ENCODE measurements at regions of chr6 and their contacts with region 1.

Region 1: GRCh38 chr6:85678602-85679444 is 36.1 kb upstream of the SYNCRIP start:
- H3K4me3 ChIP-seq: peak overlapping the region; percentile 85
- H3K27ac ChIP-seq: peak overlapping the region; percentile 85
- H3K4me1 ChIP-seq: 0 out of 2 replicates have a peak, but pooled peaks cover 7% of the 10 kb centered on the region
- CTCF ChIP-seq: peak; percentile 82

Region 2: GRCh38 chr6:85537055-85537494 is 141.7 kb before region 1 on chr6:
- CTCF ChIA-PET with region 1: interaction called, 13 read pairs
- POLR2A ChIA-PET with region 1: interaction called, 8 read pairs
- H3K4me3 ChIP-seq: no peak overlapping the region
- H3K27ac ChIP-seq: no peak overlapping the region
- H3K4me1 ChIP-seq: no peaks in the 10 kb centered on the region
- CTCF ChIP-seq: no peak

Region 3: GRCh38 chr6:85612690-85613474 is 65.9 kb before region 1 on chr6:
- CTCF ChIA-PET with region 1: no interaction called
- POLR2A ChIA-PET with region 1: interaction called, 23 read pairs
- H3K4me3 ChIP-seq: no peak overlapping the region
- H3K27ac ChIP-seq: no peak overlapping the region
- H3K4me1 ChIP-seq: no peaks in the 10 kb centered on the region
- CTCF ChIP-seq: no peak

Region 4: GRCh38 chr6:85642774-85643536 is 35.9 kb before region 1 on chr6 and contains the start of gene SYNCRIP:
- CTCF ChIA-PET with region 1: interaction called, 13 read pairs
- POLR2A ChIA-PET with region 1: interaction called, 510 read pairs
- H3K4me3 ChIP-seq: peak within 1 kb of the TSS; percentile 79
- H3K27ac ChIP-seq: peak within 1 kb of the TSS; percentile 98
- H3K4me1 ChIP-seq: peaks cover 3% of the 10 kb centered on the region; the same call in 1 of the 2 replicates
- CTCF ChIP-seq: peak; percentile 50; the same call in 1 of the 2 replicates

Region 5: DNA sequence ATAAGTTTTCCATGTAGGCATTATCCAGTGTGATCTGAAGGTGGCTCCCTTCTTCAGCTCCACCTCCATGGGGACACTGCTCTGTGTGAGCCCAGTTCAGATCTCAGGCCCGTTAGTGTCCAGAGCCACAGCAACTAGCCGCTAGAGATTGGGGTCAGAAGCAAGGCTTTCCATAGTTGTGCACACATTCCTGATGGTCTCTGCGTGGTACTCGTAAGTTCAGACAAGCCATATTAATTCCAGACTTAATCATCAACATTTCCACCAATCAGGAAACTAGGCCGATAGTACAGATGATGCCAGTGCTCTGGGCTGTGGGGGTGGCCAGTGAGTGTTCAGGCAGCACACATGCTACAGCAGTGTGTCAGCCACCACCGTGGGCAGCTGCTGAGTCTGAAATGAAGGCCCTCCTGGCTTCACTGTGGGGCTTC is 18.6 kb before region 1 on chr6:
- CTCF ChIA-PET with region 1: interaction called, 9 read pairs
- POLR2A ChIA-PET with region 1: interaction called, 27 read pairs
- H3K4me3 ChIP-seq: no peak overlapping the region
- H3K27ac ChIP-seq: no peak overlapping the region
- H3K4me1 ChIP-seq: no peaks in the 10 kb centered on the region
- CTCF ChIP-seq: peak; percentile 52; the same call in 1 of the 2 replicates

Measured in HEK293 (cell line).